Activated T-helper 2 cell treated with anti-CD3 and anti-CD28 coated beads, Interferon-gamma antibody, Interleukin-2, Interleukin-4, amounts not matched to agents 10 μg/mL and 5 μg/mL and 100 μg/mL, durations not matched to agents 14 hours and 24 hours and 36 hours (primary cell): ENCODE measurements at regions of chr12 and their contacts with region 1.

Region 1: GRCh38 chr12:64610149-64610678 is at the start of gene RASSF3:
- DNase-seq: peak; percentile 76
- H3K4me3 Mint-ChIP-seq: peak within 1 kb of the TSS; percentile 92
- H3K27ac Mint-ChIP-seq: peak within 1 kb of the TSS; percentile 87
- H3K4me1 Mint-ChIP-seq: peaks cover 29% of the 10 kb centered on the region
- H3K27me3 Mint-ChIP-seq: no peaks in the 10 kb centered on the region
- total RNA-seq, gene RASSF3: 35.7 and 35.8 TPM in 2 replicates

Region 2: GRCh38 chr12:64451687-64452558 is 158.3 kb before region 1 on chr12 and contains the start of gene TBK1:
- intact Hi-C with region 1: loop called (anchors 5 kb)
- DNase-seq: peak; percentile 66
- H3K4me3 Mint-ChIP-seq: peak within 1 kb of the TSS; percentile 94
- H3K27ac Mint-ChIP-seq: peak within 1 kb of the TSS; percentile 95
- H3K4me1 Mint-ChIP-seq: peaks cover 35% of the 10 kb centered on the region
- H3K27me3 Mint-ChIP-seq: no peaks in the 10 kb centered on the region
- total RNA-seq, gene TBK1: 34.1 and 35.3 TPM in 2 replicates

Region 3: DNA sequence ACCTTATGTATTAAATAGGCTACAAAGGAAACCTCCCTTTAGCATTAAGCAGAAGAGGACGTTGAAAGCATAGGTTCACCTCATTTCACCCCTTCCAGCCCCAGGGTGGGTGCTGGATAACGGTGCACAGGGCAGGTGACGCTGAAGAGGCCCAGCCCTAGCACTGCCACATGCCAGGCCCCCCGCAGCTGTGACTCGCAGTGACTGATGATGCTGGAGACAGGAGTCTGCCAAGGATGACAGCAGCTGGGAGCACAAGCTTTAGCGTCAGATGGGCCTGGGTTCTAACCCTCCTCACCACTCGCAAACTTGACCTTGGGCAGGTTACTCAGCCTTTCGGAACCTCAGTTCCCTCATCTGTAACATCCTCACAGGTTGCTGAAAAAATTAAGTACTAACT is 81.6 kb before region 1 on chr12:
- intact Hi-C with region 1: no loop called
- DNase-seq: no peak
- H3K4me3 Mint-ChIP-seq: no peak overlapping the region
- H3K27ac Mint-ChIP-seq: no peak overlapping the region
- H3K4me1 Mint-ChIP-seq: no peaks in the 10 kb centered on the region
- H3K27me3 Mint-ChIP-seq: peaks cover 6% of the 10 kb centered on the region

Region 4: DNA sequence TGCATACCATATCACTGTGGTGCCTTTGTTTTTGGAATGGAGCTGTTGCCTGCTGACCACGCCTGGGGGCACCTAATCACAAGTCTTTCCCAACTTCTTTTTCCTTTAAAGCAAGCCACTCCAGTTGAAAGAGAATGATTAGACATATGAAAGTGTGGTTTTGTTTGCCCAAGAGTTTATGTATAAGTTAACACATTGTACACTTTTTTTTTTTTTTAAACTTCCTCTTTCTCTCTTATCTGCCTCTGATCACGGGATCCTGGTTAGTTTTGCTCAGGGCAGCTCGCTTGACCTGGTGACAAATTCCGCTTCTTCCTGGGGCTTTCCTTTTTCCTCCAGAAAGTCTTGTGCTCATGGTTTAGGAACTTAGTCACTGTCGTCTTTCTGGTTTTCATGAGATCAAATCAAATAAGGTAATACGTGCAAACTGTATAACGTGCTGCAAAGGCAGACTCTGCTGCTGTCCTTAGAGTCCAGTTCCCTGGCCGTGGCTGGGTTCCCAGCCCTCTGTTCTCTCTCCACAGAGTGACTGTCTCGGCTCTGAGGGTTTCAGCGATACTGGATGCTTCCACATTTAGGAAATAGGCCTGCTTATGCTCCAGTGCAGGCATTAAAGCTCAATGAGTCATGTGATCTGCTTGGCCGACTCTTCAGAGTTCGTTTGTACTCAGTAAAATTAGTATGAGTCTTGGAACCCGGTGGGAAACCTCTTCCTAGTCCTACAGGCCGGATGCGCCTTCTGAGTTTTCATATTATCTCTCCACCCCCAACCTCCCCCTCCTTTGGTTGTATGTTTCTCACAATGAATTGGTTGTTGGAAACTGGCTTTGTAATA is 15.2 kb after region 1 on chr12:
- intact Hi-C with region 1: loop called (anchors 1 kb)
- DNase-seq: no peak
- H3K4me3 Mint-ChIP-seq: peak overlapping the region; percentile 73
- H3K27ac Mint-ChIP-seq: peak overlapping the region; percentile 83
- H3K4me1 Mint-ChIP-seq: peaks cover 25% of the 10 kb centered on the region
- H3K27me3 Mint-ChIP-seq: no peaks in the 10 kb centered on the region

Region 5: GRCh38 chr12:64682572-64683277 is 72.5 kb after region 1 on chr12:
- intact Hi-C with region 1: loop called (anchors 2 kb)
- DNase-seq: no peak
- H3K4me3 Mint-ChIP-seq: no peak overlapping the region
- H3K27ac Mint-ChIP-seq: no peak overlapping the region
- H3K4me1 Mint-ChIP-seq: peaks cover 62% of the 10 kb centered on the region
- H3K27me3 Mint-ChIP-seq: no peaks in the 10 kb centered on the region

Region 6: DNA sequence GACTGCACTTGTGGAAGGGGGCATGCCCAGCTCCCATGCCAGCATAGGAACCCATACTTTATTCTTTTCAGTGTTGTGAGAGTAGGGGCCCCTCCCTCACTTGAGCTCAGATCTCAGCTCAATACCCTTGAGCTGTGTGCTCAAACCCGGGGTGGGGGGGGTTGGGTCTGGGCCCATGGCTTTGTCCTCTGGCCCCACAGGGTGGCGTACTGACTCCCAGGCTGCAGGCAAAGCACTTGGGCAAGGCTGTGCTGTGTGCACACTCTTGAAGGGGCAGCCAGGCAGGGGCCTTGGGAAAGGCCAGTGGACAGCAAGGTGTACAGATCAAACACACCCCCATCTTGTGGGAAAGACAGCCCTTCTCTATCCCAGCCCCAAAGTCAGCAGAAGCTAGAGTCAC is 429.1 kb after region 1 on chr12:
- intact Hi-C with region 1: no loop called
- DNase-seq: no peak
- H3K4me3 Mint-ChIP-seq: no peak overlapping the region
- H3K27ac Mint-ChIP-seq: no peak overlapping the region
- H3K4me1 Mint-ChIP-seq: no peaks in the 10 kb centered on the region
- H3K27me3 Mint-ChIP-seq: no peaks in the 10 kb centered on the region

Region 7: GRCh38 chr12:65169320-65170208 is 559.4 kb after region 1 on chr12 and contains the start of gene LEMD3:
- intact Hi-C with region 1: loop called (anchors 1 kb)
- DNase-seq: peak; percentile 88
- H3K4me3 Mint-ChIP-seq: peak within 1 kb of the TSS; percentile 99
- H3K27ac Mint-ChIP-seq: peak within 1 kb of the TSS; percentile 99
- H3K4me1 Mint-ChIP-seq: peaks cover 24% of the 10 kb centered on the region
- H3K27me3 Mint-ChIP-seq: peaks cover 2% of the 10 kb centered on the region
- total RNA-seq, gene LEMD3: 26.7 and 29.2 TPM in 2 replicates